CD8-positive, alpha-beta T cell (primary cell): ENCODE measurements at regions of chr6 and their contacts with region 1.

Region 1: DNA sequence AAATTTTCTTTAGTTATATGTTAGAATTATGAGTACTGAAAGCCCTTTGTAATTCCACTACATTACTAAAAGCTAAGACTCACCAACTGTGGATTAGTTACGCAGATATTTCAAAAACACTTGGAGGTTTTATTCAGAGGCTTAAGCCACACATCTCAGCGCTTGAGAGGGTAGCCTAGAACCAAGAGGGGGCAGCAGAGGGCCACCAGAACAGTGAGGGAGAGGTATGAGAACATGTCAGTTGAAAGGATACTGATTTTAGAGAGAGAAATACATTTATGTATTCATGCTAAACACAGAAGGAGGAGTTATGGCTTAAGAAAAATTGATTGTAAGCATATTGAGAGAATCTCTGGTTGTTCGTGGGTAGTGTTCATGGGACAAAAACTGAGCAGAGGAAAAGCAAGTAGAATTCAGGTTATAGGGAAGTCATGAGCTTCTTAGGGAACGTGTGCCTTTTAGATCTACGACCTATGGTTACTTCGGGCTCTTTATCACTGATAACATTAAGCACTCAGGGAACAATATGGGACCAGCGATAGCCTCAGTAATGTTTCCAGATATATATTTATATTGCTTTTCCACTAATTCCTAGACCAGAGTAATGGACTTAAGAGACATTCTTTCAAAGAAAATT is 20.4 kb upstream of the SERINC1 start:
- DNase-seq: peak; percentile 41 to 76 (median 70)
- ATAC-seq: peak; percentile 100
- H3K4me3 ChIP-seq: no peak overlapping the region
- H3K4me3 Mint-ChIP-seq: no peak overlapping the region
- H3K27ac ChIP-seq: no peak overlapping the region
- H3K27ac Mint-ChIP-seq: no peak overlapping the region
- H3K4me1 ChIP-seq: peaks cover 4% of the 10 kb centered on the region
- H3K4me1 Mint-ChIP-seq: peaks cover 12% of the 10 kb centered on the region
- H3K27me3 ChIP-seq: no peaks in the 10 kb centered on the region
- H3K27me3 Mint-ChIP-seq: peaks cover under 1% of the 10 kb centered on the region
- CTCF ChIP-seq: peak; percentile 88

Region 2: GRCh38 chr6:122683989-122684651 is 192.1 kb after region 1 on chr6:
- CTCF ChIA-PET with region 1: no interaction called
- POLR2A ChIA-PET with region 1: no interaction called
- intact Hi-C with region 1: no loop called
- DNase-seq: no peak
- ATAC-seq: no peak
- H3K4me3 ChIP-seq: no peak overlapping the region
- H3K4me3 Mint-ChIP-seq: no peak overlapping the region
- H3K27ac ChIP-seq: no peak overlapping the region
- H3K27ac Mint-ChIP-seq: no peak overlapping the region
- H3K4me1 ChIP-seq: no peaks in the 10 kb centered on the region
- H3K4me1 Mint-ChIP-seq: no peaks in the 10 kb centered on the region
- H3K27me3 ChIP-seq: no peaks in the 10 kb centered on the region
- H3K27me3 Mint-ChIP-seq: no peaks in the 10 kb centered on the region
- CTCF ChIP-seq: no peak

Region 3: DNA sequence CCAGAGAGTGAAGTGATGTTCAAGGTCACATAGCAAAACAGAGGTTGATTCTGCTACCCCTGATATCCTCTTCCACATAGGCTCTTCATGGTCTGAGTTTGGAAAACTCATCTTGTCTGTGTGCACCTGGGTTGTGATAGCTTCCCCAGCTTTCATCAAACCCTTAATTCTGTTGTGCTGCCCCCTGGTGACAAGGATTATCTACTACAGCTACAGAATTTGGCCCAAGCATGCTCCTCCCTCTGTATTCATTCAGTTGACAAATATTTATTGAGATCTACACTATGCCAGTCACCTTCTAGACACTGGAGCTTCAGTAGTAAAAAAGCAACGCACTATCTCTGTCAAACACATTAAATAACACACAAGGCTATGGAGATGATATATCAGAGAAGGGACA is 347.4 kb after region 1 on chr6:
- CTCF ChIA-PET with region 1: no interaction called
- POLR2A ChIA-PET with region 1: no interaction called
- intact Hi-C with region 1: loop called (anchors 5 kb)
- DNase-seq: peak in 6 of 9 experiments; percentile 14 to 57 (median 44)
- ATAC-seq: peak; percentile 46
- H3K4me3 ChIP-seq: no peak overlapping the region
- H3K4me3 Mint-ChIP-seq: no peak overlapping the region
- H3K27ac ChIP-seq: no peak overlapping the region
- H3K27ac Mint-ChIP-seq: no peak overlapping the region
- H3K4me1 ChIP-seq: no peaks in the 10 kb centered on the region
- H3K4me1 Mint-ChIP-seq: no peaks in the 10 kb centered on the region
- H3K27me3 ChIP-seq: no peaks in the 10 kb centered on the region
- H3K27me3 Mint-ChIP-seq: peaks cover 4% of the 10 kb centered on the region
- CTCF ChIP-seq: peak; percentile 53

Region 4: GRCh38 chr6:123316733-123317323 is 824.8 kb after region 1 on chr6:
- CTCF ChIA-PET with region 1: no interaction called
- POLR2A ChIA-PET with region 1: no interaction called
- intact Hi-C with region 1: loop called in 1 of 2 experiments (anchors 5 kb)
- DNase-seq: peak in 1 of 9 experiments; percentile 12
- ATAC-seq: no peak
- H3K4me3 ChIP-seq: no peak overlapping the region
- H3K4me3 Mint-ChIP-seq: no peak overlapping the region
- H3K27ac ChIP-seq: no peak overlapping the region
- H3K27ac Mint-ChIP-seq: no peak overlapping the region
- H3K4me1 ChIP-seq: no peaks in the 10 kb centered on the region
- H3K4me1 Mint-ChIP-seq: no peaks in the 10 kb centered on the region
- H3K27me3 ChIP-seq: no peaks in the 10 kb centered on the region
- H3K27me3 Mint-ChIP-seq: no peaks in the 10 kb centered on the region
- CTCF ChIP-seq: peak; percentile 50